ENCODE measurements at regions of chr4 and their contacts with region 1.

Region 1: GRCh38 chr4:98929341-98930267 is 671 bp upstream of the EIF4E start:
- DNase-seq: peak; percentile 73
- ATAC-seq: peak; percentile 45 to 76

Region 2: DNA sequence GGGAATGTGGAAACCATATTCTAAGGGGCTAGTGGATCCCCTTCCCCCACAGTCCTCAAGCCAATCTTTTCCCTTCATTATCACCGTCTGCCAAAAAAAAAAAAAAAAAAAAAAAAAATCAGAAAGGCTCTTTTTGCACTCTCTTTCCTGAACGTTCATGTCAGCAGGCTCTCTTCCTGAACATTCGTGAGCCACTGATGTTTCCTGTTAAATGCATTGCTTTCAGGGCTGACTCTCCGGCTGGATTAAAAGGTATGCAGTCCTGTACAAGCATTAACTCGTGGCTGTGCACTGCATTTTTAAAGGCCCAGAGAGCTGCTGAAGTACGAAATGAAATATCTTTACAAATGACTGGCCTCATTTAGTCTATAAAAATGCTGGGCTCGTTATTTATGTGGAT is 237.2 kb before region 1 on chr4:
- intact Hi-C with region 1: no loop called
- DNase-seq: no peak
- ATAC-seq: no peak

Region 3: GRCh38 chr4:98995183-98996055 is 65.8 kb after region 1 on chr4 and contains the start of gene METAP1:
- intact Hi-C with region 1: loop called (anchors 5 to 10 kb)
- DNase-seq: peak; percentile 96
- ATAC-seq: peak; percentile 93 to 97
- total RNA-seq, gene METAP1: 38.0 to 50.0 TPM

Measured in left cardiac atrium (tissue), 4 donors.